A549 (cell line): ENCODE measurements at regions of chr17 and their contacts with region 1.

Region 1: DNA sequence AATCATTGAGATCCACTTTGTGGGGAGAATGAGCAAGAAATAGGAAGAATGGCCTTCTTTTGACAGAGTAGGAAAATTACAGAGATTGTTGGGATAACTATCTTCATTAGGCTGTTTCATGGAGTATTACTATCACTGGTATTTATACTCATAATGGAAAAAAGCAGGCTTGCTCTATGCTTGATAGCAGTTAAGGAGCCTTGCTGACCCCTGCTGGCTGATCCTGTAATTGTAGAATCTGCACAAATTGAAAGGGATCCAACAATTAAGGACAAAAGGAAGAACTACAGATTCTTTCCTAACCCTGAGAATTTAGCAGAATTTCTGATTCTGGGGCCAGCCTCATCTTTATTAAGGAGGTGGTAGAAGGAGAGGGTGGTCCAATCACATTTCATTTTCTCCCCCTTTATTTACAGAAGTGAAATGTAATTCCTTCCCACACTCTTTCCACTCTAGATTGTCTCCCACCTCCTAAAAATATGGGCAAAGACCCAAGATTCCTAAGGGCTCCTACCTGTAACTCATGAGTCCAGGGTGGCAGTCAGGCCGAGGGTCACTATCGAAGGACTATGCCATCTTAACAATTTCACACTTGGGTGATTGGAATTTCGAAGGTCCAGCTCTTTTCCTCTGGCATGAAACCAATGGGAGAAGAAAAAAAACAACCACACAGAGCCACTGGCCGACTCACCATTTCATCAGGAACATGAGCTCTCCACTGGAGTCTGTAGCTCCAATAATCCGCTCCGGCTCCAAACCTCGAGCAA is 26.3 kb downstream of the NFE2L1 start:
- DNase-seq: peak; percentile 72 to 80
- ATAC-seq: peak; percentile 91 to 92
- H3K4me3 ChIP-seq: no peak overlapping the region
- H3K27ac ChIP-seq: no peak overlapping the region
- H3K4me1 ChIP-seq: no peaks in the 10 kb centered on the region
- CTCF ChIP-seq: peak; percentile 96
- EP300 ChIP-seq: no peak
- POLR2A ChIP-seq: no peak
- RAD21 ChIP-seq: peak; percentile 83 to 88

Region 2: DNA sequence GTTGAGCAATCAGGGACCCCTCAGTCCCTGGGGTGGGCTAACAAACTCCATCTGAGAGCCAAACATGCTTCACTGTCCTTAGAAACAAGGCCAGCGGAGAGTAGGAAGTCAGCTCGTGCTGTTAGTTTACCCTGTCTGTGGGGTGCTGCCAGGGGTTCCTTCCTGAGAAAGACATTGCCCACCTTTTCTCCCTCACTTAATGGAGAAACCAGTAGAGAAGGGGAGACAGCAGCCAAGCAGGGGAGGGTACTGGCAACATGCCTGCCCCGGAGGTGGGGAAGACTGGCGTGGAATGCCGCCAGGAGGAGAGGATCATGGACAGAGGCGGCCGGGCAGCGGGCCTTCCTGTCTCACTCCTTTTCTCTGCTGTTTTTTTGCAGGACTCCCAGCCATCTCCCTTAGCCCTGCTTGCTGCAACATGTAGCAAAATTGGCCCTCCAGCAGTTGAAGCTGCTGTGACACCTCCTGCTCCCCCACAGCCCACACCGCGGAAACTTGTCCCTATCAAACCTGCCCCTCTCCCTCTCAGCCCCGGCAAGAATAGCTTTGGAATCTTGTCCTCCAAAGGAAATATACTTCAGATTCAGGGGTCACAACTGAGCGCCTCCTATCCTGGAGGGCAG is 158.6 kb before region 1 on chr17:
- CTCF ChIA-PET with region 1: no interaction called
- POLR2A ChIA-PET with region 1: no interaction called
- DNase-seq: no peak
- ATAC-seq: no peak; a peak in 1 of 6 replicates
- H3K4me3 ChIP-seq: no peak overlapping the region
- H3K27ac ChIP-seq: no peak overlapping the region
- H3K4me1 ChIP-seq: 0 out of 3 replicates have a peak, but pooled peaks cover 3% of the 10 kb centered on the region
- CTCF ChIP-seq: no peak
- EP300 ChIP-seq: no peak
- POLR2A ChIP-seq: no peak
- RAD21 ChIP-seq: no peak

Region 3: DNA sequence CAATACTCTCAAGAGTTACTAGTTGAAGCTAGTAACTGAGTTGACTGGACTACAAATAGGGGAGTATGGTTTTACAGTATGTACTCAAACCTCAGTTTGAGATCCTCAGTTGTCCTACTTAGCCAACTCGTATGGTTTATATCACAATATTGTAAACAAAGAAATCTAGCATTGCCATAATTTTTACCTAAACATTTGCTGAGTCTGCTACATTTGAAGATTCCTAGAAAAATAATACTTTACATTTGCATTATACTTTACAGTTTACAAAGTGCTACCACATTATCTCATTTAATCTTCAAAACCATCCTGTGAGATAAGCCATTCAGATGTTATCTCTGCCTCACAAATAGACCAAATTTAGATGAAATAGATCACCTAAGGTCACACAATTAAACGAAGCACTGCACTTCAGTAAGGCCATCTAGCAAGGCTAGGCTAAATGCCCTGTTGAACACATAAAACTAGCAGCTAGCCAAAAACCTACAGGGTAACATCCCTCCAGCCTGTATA is 10.5 kb after region 1 on chr17:
- CTCF ChIA-PET with region 1: interaction called, 1,398 read pairs
- POLR2A ChIA-PET with region 1: no interaction called
- DNase-seq: no peak
- ATAC-seq: no peak
- H3K4me3 ChIP-seq: no peak overlapping the region
- H3K27ac ChIP-seq: no peak overlapping the region
- H3K4me1 ChIP-seq: peaks cover 17% of the 10 kb centered on the region
- CTCF ChIP-seq: no peak
- EP300 ChIP-seq: no peak
- POLR2A ChIP-seq: no peak
- RAD21 ChIP-seq: no peak

Region 4: GRCh38 chr17:48095611-48096010 is 21.1 kb after region 1 on chr17:
- CTCF ChIA-PET with region 1: interaction called, 152 read pairs
- POLR2A ChIA-PET with region 1: no interaction called
- DNase-seq: no peak
- ATAC-seq: no peak
- H3K4me3 ChIP-seq: no peak overlapping the region
- H3K27ac ChIP-seq: no peak overlapping the region
- H3K4me1 ChIP-seq: peaks cover 23% of the 10 kb centered on the region
- CTCF ChIP-seq: no peak
- EP300 ChIP-seq: no peak
- POLR2A ChIP-seq: no peak
- RAD21 ChIP-seq: no peak

Region 5: GRCh38 chr17:48107168-48108132 is 33.0 kb after region 1 on chr17 and contains the start of gene SNX11:
- CTCF ChIA-PET with region 1: interaction called, 17 read pairs
- POLR2A ChIA-PET with region 1: no interaction called
- DNase-seq: peak; percentile 90 to 93
- ATAC-seq: peak; percentile 97 to 99
- H3K4me3 ChIP-seq: peak within 1 kb of the TSS; percentile 76
- H3K27ac ChIP-seq: peak within 1 kb of the TSS; percentile 91 to 92
- H3K4me1 ChIP-seq: peaks cover 9% of the 10 kb centered on the region
- CTCF ChIP-seq: no peak
- EP300 ChIP-seq: no peak
- POLR2A ChIP-seq: peak; percentile 78
- RAD21 ChIP-seq: no peak
- polyA plus RNA-seq, gene SNX11: 28.4 and 30.9 TPM in 2 replicates

Region 6: GRCh38 chr17:48123111-48123510 is 48.6 kb after region 1 on chr17:
- CTCF ChIA-PET with region 1: interaction called, 157 read pairs
- POLR2A ChIA-PET with region 1: no interaction called
- DNase-seq: no peak
- ATAC-seq: no peak
- H3K4me3 ChIP-seq: no peak overlapping the region
- H3K27ac ChIP-seq: no peak overlapping the region
- H3K4me1 ChIP-seq: peaks cover 12% of the 10 kb centered on the region
- CTCF ChIP-seq: no peak
- EP300 ChIP-seq: no peak
- POLR2A ChIP-seq: no peak
- RAD21 ChIP-seq: no peak